Adrenal gland (tissue), 19 donors: ENCODE measurements at regions of chr3 and their contacts with region 1.

Region 1: DNA sequence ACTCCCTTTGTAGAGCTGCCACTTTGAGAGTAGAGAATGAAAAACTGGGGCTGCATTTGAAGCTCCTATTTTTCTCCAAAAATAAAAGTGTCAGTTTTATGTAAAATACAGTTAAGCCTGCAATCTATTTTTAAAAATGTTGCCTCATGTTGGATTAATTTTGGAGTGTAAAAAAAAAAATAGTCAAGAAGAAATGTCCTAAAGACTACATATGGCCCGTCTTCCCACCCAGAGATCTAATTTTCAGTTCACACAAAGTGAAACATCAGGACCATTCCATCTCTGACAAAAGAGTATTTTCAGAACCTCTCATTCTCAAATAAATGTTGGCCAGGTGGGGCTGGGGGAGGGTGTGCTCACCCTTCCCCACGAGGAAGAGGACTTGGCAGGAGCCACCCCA is 62.7 kb downstream of the HHLA2 start:
- DNase-seq: no peak
- H3K4me3 ChIP-seq: no peak overlapping the region
- H3K27ac ChIP-seq: no peak overlapping the region
- H3K4me1 ChIP-seq: no peaks in the 10 kb centered on the region
- H3K27me3 ChIP-seq: no peaks in the 10 kb centered on the region
- CTCF ChIP-seq: no peak
- POLR2A ChIP-seq: no peak

Region 2: DNA sequence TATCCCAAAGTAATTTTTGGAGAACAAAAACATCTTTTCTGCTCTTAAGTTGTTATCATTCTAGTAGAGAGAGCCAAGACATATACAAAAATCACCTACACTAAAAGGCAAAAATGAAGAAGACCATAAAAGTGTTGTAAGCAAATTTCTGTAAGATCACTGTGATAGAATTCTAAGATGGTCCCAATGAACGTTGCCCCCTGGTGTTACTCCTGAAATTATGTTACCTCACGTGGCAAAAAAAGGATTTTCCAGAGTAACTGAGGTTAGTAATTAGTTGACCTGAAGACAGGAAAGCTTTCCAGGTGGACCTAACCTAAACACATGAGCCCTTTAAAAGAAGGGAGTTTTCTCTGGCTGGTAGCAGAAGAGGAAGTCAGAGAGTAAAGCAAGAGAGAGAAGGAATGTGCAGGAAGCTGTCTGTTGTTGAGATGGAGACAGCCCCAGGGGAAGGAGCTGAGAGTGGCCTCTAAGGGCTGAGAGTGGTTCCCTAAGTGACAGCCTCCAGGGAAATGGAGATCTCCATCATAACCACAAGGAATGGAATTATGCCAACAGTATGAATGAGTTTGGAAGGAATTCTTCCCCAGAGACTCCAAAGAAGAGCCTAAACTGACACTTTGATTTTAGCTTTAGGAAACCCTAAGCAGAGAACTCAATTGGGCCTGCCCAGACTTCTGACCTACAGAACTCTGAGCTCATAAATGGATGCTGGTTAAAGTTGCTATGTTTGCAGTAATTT is 474.1 kb before region 1 on chr3:
- intact Hi-C with region 1: no loop called
- DNase-seq: no peak
- H3K4me3 ChIP-seq: no peak overlapping the region
- H3K27ac ChIP-seq: no peak overlapping the region
- H3K4me1 ChIP-seq: no peaks in the 10 kb centered on the region
- H3K27me3 ChIP-seq: no peaks in the 10 kb centered on the region
- CTCF ChIP-seq: no peak
- POLR2A ChIP-seq: no peak

Region 3: GRCh38 chr3:108311797-108312196 is 47.2 kb before region 1 on chr3:
- intact Hi-C with region 1: loop called in 1 of 2 experiments (anchors 2 kb)
- DNase-seq: no peak
- H3K4me3 ChIP-seq: no peak overlapping the region
- H3K27ac ChIP-seq: no peak overlapping the region
- H3K4me1 ChIP-seq: no peaks in the 10 kb centered on the region
- H3K27me3 ChIP-seq: no peaks in the 10 kb centered on the region
- CTCF ChIP-seq: no peak
- POLR2A ChIP-seq: no peak